WTC11 (cell line): ENCODE measurements at regions of chr12 and their contacts with region 1.

Region 1: GRCh38 chr12:50986966-50987737 is 34.8 kb downstream of the HIGD1C start:
- DNase-seq: peak; percentile 21
- ATAC-seq: peak; percentile 97
- H3K4me3 Mint-ChIP-seq: no peak overlapping the region
- H3K27ac Mint-ChIP-seq: peak overlapping the region; percentile 89
- H3K4me1 Mint-ChIP-seq: peaks cover 4% of the 10 kb centered on the region
- H3K27me3 Mint-ChIP-seq: no peaks in the 10 kb centered on the region
- CTCF ChIP-seq: no peak

Region 2: DNA sequence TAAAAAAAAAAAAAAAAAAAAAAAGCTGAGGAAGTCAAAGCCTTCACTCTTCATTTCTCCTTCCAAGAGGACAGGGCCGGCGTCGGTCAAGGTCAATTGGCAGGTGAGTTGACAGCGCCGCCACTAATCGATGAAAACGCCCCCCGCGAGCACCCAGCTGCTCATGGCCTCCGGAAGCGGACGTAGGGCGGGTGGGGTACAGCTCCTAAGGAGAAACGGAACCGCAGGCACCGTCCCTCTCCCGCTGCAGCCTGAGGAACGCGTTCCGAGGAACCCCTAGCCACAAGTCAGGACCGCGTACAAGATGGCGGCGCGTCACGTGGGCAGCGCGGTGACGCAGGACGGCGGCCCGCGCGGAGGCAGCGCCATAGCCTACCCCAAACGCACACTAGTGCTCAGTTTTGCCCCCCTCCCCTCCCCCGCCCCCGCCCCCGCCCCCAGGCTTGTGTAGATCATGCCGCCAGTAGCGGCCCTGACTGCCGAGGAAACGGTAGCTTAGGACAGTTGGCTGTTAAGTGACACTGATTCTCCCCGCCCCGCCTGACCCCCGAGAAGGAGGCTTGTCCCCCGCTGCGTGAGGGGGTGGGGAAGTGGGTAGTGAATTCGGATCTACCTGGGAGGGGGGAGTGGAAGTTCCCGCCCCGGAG is 223.4 kb before region 1 on chr12 and contains the start of gene ATF1:
- CTCF ChIA-PET with region 1: interaction called, 41 read pairs
- POLR2A ChIA-PET with region 1: no interaction called
- DNase-seq: peak; percentile 89
- ATAC-seq: peak; percentile 86
- H3K4me3 Mint-ChIP-seq: peak within 1 kb of the TSS; percentile 91
- H3K27ac Mint-ChIP-seq: peak within 1 kb of the TSS; percentile 97
- H3K4me1 Mint-ChIP-seq: peaks cover 31% of the 10 kb centered on the region
- H3K27me3 Mint-ChIP-seq: no peaks in the 10 kb centered on the region
- CTCF ChIP-seq: no peak
- total RNA-seq, gene ATF1: 34.6 to 36.6 TPM (median 34.8 TPM) in 3 replicates

Region 3: GRCh38 chr12:50825372-50825838 is 161.7 kb before region 1 on chr12:
- CTCF ChIA-PET with region 1: interaction called, 70 read pairs
- POLR2A ChIA-PET with region 1: no interaction called
- DNase-seq: no peak
- ATAC-seq: no peak; the same call in 1 of the 2 replicates
- H3K4me3 Mint-ChIP-seq: no peak overlapping the region
- H3K27ac Mint-ChIP-seq: no peak overlapping the region
- H3K4me1 Mint-ChIP-seq: no peaks in the 10 kb centered on the region
- H3K27me3 Mint-ChIP-seq: no peaks in the 10 kb centered on the region
- CTCF ChIP-seq: peak; percentile 34

Region 4: GRCh38 chr12:50922820-50923219 is 64.3 kb before region 1 on chr12:
- CTCF ChIA-PET with region 1: interaction called, 11 read pairs
- POLR2A ChIA-PET with region 1: no interaction called
- DNase-seq: no peak
- ATAC-seq: no peak
- H3K4me3 Mint-ChIP-seq: no peak overlapping the region
- H3K27ac Mint-ChIP-seq: peak overlapping the region; percentile 86
- H3K4me1 Mint-ChIP-seq: peaks cover 55% of the 10 kb centered on the region
- H3K27me3 Mint-ChIP-seq: no peaks in the 10 kb centered on the region; the same call in 1 of the 2 replicates
- CTCF ChIP-seq: no peak

Region 5: GRCh38 chr12:50964432-50964831 is 22.7 kb before region 1 on chr12:
- CTCF ChIA-PET with region 1: no interaction called
- POLR2A ChIA-PET with region 1: no interaction called
- DNase-seq: no peak
- ATAC-seq: no peak
- H3K4me3 Mint-ChIP-seq: no peak overlapping the region
- H3K27ac Mint-ChIP-seq: no peak overlapping the region
- H3K4me1 Mint-ChIP-seq: no peaks in the 10 kb centered on the region
- H3K27me3 Mint-ChIP-seq: no peaks in the 10 kb centered on the region
- CTCF ChIP-seq: no peak

Region 6: DNA sequence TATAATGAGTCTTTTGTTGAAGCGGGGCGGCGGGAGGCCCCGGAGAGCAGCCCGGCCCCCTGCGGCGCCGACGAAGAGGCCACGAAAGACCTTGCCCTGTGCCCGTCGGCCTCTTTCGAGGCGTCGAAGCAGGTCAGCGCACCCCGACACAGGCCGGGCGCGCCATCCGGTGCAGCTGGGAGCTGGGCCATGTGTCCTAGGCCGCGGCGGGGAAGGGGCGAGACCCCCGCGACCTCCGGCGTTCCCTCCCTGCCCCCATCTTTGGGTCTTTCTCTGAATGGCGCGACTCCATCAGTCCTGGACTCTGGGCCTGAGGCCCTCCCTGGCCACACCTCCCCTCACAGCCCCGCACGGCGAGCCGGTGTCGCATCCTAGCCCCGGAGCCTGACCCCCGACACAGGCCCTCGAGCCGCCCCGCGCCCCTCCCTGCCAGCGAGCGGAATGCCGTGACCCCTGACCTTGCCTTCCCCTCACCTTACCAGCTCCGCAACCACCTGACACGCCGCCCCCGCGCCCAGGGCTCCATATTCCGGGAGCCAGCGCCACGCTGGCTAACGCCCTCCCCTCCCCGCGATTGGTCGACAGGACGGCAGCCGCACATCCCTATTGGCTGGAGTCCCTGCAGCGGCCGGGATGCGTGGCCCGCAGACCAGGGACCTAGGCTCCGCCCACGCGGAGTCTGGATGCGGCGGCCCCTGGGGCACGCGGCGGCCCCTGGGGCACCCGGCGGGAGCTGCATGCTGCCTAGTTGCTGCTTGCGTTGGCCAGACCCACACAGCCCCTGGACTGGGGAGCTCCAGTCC is 38.9 kb after region 1 on chr12 and contains the start of gene SLC11A2:
- CTCF ChIA-PET with region 1: interaction called, 55 read pairs
- POLR2A ChIA-PET with region 1: no interaction called
- DNase-seq: peak; percentile 97
- ATAC-seq: peak; percentile 94
- H3K4me3 Mint-ChIP-seq: peak within 1 kb of the TSS; percentile 87
- H3K27ac Mint-ChIP-seq: peak within 1 kb of the TSS; percentile 93
- H3K4me1 Mint-ChIP-seq: peaks cover 47% of the 10 kb centered on the region
- H3K27me3 Mint-ChIP-seq: no peaks in the 10 kb centered on the region
- CTCF ChIP-seq: no peak
- total RNA-seq, gene SLC11A2: 48.6 to 58.0 TPM (median 54.6 TPM) in 3 replicates

Region 7: GRCh38 chr12:51055060-51055459 is 67.9 kb after region 1 on chr12:
- CTCF ChIA-PET with region 1: no interaction called
- POLR2A ChIA-PET with region 1: no interaction called
- DNase-seq: no peak
- ATAC-seq: no peak
- H3K4me3 Mint-ChIP-seq: no peak overlapping the region
- H3K27ac Mint-ChIP-seq: no peak overlapping the region
- H3K4me1 Mint-ChIP-seq: no peaks in the 10 kb centered on the region
- H3K27me3 Mint-ChIP-seq: no peaks in the 10 kb centered on the region
- CTCF ChIP-seq: no peak